Activated B cell treated with CpG ODN at 0.5 μM for 24 hours (primary cell): ENCODE measurements at regions of chr5 and their contacts with region 1.

Region 1: DNA sequence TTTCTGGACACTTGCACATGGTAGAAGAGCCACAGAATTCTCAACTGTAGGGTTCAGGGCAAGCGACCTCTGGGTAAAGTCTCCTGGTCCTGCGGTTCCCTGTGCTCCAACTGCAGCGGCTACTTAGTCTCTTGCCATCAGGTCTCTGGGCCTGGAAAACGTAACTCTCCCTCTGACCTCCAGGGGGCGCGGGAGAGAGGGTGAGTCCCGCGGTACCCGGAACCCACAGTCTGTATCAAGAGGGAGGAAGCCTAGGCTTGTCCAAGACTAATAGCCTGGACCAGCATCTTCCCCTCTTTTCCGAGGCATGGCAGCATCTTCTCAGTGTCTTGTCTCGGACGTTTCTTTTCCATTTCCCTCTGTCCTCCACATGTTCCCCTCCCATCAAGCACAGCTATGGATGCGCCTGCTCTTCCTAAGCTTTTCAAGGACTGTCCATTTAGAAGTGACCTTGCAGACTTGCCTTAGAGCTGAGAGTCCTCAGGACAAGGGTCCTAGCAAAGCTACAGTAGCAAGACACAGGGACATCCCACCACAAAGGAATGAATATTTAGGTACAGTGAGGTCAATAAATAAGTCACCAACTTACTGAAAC is 59.3 kb downstream of the FSTL4 start:
- DNase-seq: peak; percentile 46
- ATAC-seq: peak; percentile 71
- H3K4me3 Mint-ChIP-seq: no peak overlapping the region
- H3K27ac Mint-ChIP-seq: no peak overlapping the region
- H3K4me1 Mint-ChIP-seq: no peaks in the 10 kb centered on the region
- H3K27me3 Mint-ChIP-seq: peaks cover 33% of the 10 kb centered on the region
- CTCF ChIP-seq: no peak

Region 2: DNA sequence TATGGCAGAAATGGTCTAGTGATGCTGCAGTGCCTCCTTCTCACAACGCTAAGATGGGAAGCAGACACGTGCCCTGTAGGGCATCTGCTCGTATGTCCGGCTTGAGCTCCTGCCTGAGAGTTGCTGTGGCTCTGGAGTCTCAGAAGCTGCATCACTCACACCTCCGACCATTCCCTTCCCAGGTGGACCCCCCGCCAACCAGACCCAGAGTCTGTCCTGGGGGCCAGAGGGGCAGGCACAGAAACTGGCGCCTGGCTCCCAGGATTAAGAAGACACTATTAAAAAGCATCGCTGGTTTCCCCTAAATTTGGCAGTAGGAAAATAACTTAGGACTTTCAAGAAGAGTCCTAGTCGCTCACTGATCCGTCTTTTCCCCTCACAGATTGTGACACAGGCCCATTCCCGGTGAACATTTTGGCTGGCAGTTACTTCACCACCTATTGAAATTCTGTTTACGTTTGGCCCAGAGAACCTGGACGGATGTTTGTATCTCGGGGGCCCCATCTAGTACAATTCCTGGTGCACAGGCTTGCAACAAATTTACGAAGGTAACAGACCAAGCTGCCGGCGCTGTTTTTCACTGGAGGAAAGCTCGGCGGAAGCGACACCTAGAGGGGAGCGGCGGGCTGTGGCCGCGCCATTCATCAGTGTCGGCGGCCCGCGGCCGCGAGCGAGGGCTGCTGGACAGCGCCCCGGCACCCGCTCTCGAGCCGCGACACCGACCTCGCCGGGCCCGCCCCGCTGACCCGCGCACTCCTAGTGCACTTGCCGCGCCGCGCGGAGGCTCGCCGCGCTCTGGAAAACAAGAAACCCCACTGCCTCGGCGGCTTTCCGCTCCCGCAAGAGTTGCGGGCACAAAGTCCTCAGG is 57.7 kb after region 1 on chr5:
- CTCF ChIA-PET with region 1: interaction called, 4 read pairs
- POLR2A ChIA-PET with region 1: no interaction called
- intact Hi-C with region 1: loop called (anchors 1 kb)
- DNase-seq: peak; percentile 39
- ATAC-seq: peak; percentile 73
- H3K4me3 Mint-ChIP-seq: peak overlapping the region; percentile 73
- H3K27ac Mint-ChIP-seq: no peak overlapping the region
- H3K4me1 Mint-ChIP-seq: peaks cover 17% of the 10 kb centered on the region
- H3K27me3 Mint-ChIP-seq: peaks cover 53% of the 10 kb centered on the region
- CTCF ChIP-seq: no peak